ENCODE measurements at regions of chr1 and their contacts with region 1.

Region 1: DNA sequence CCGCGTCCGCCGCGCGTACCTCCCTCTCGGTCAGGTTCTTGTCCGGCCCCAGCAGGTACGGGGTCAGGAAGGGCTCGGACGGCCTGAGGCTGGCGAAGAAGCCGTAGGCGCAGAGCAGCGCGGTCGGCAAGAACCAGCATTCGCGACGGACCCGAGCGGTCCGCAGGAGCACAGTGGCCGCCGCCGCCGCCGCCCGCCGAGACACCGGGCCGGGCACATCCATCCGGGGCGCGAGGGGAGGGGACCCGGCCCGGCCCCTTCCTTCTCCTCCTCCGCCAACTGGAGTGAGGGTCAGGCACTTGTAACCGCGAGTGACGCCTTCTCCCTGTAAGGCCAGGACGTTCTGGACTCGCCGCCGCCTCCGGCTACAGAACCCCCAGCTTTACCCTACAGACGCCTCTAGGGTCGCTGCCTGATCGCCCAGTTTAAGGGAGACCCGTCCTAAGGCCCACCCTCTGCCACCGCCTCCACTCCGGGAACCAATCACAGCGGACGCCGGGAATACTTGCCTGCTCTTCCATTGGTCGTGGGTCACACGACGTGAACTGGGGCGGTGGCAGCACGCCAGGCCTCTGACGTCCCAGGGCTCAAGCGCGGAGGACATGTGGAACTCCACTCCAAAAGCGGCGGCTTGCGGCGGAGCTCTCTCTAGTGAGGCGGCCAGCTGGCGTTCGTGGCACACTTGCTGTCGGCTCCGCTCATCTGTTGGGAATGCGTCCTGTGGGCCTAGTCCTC is at the start of gene SLC19A2:
- DNase-seq: peak; percentile 98 to 100
- H3K4me3 ChIP-seq: peak within 1 kb of the TSS; percentile 80 to 98
- H3K27ac ChIP-seq: peak within 1 kb of the TSS; percentile 99 to 100
- H3K4me1 ChIP-seq: peaks cover 0 to 27% of the 10 kb centered on the region in 2 donors
- H3K27me3 ChIP-seq: no peaks in the 10 kb centered on the region
- CTCF ChIP-seq: peak in 2 of 3 experiments; percentile 32 to 39
- total RNA-seq, gene SLC19A2: 36.7 TPM

Region 2: DNA sequence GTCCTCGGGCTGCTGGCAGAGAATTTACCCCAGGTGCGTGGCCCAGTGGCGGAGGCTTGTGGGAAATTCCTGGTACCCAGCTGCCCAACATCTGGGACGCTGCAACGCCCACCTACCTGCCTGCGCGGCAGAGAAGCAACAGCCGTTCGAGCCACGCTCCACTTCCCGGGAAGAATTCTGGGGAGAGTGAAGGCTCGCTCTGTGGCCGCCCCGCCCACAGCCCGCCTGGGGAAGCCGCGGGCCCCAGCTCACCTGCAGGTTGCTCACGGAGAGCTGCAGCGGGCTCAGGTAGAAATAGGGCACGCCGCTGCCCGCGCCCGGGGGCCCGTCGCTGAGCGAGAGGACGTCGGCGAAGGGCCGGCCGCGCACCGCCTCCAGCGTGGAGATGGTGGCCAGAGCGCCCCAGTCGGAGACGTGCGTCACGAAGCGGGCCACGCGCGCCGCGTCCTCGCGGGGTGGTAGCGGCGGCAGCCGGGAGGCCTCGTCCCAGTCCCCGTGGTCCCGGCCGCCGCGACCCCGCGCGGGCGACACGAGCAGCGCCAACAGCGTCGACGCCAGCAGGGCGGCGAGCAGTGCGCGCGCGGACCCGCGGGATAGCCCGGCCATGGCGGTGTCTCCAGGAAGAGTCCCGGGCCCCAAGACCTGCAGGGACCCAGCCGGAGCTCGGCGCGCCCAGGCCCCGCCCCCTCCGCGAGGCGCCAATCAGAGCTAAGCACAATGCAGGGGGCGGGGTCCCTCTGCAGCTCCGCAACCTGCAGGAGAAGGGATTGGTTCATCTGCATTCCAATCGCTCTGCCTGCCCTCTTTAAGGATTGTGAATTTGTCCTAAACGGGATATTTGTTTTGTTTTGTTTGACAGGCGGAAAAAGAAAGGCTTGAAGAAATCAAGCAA is 1932.3 kb before region 1 on chr1 and contains the start of gene CREG1:
- intact Hi-C with region 1: loop called (anchors 10 kb)
- DNase-seq: peak; percentile 76 to 96
- H3K4me3 ChIP-seq: peak within 1 kb of the TSS; percentile 77 to 85
- H3K27ac ChIP-seq: peak within 1 kb of the TSS; percentile 74 to 80
- H3K4me1 ChIP-seq: peaks cover 0 to 7% of the 10 kb centered on the region in 2 donors
- H3K27me3 ChIP-seq: no peaks in the 10 kb centered on the region
- CTCF ChIP-seq: no peak
- total RNA-seq, gene CREG1: 170 TPM

Region 3: GRCh38 chr1:167936068-167936929 is 1549.4 kb before region 1 on chr1 and contains the start of gene DCAF6:
- intact Hi-C with region 1: loop called (anchors 10 kb)
- DNase-seq: peak; percentile 91 to 98
- H3K4me3 ChIP-seq: peak within 1 kb of the TSS; percentile 91
- H3K27ac ChIP-seq: peak within 1 kb of the TSS; percentile 96 to 98
- H3K4me1 ChIP-seq: peaks cover 0 to 14% of the 10 kb centered on the region in 2 donors
- H3K27me3 ChIP-seq: no peaks in the 10 kb centered on the region
- CTCF ChIP-seq: no peak
- total RNA-seq, gene DCAF6: 9.8 TPM

Region 4: GRCh38 chr1:168603501-168604110 is 882.1 kb before region 1 on chr1:
- intact Hi-C with region 1: loop called (anchors 10 kb)
- DNase-seq: peak in 1 of 2 donors; percentile 82
- H3K4me3 ChIP-seq: no peak overlapping the region
- H3K27ac ChIP-seq: no peak overlapping the region
- H3K4me1 ChIP-seq: peaks cover 1 to 10% of the 10 kb centered on the region in 2 donors
- H3K27me3 ChIP-seq: no peaks in the 10 kb centered on the region
- CTCF ChIP-seq: peak; percentile 76 to 86 (median 81)

Region 5: GRCh38 chr1:169367486-169368405 is 118.0 kb before region 1 on chr1 and contains the starts of genes BLZF1 and NME7:
- intact Hi-C with region 1: loop called (anchors 1 kb)
- DNase-seq: peak; percentile 95 to 98
- H3K4me3 ChIP-seq: peak within 1 kb of the TSS; percentile 84 to 90
- H3K27ac ChIP-seq: peak within 1 kb of the TSS; percentile 64 to 80
- H3K4me1 ChIP-seq: peaks cover 0 to 6% of the 10 kb centered on the region in 2 donors
- H3K27me3 ChIP-seq: no peaks in the 10 kb centered on the region
- CTCF ChIP-seq: no peak
- total RNA-seq, gene BLZF1: 8.5 TPM
- total RNA-seq, gene NME7: 4.9 TPM

Region 6: DNA sequence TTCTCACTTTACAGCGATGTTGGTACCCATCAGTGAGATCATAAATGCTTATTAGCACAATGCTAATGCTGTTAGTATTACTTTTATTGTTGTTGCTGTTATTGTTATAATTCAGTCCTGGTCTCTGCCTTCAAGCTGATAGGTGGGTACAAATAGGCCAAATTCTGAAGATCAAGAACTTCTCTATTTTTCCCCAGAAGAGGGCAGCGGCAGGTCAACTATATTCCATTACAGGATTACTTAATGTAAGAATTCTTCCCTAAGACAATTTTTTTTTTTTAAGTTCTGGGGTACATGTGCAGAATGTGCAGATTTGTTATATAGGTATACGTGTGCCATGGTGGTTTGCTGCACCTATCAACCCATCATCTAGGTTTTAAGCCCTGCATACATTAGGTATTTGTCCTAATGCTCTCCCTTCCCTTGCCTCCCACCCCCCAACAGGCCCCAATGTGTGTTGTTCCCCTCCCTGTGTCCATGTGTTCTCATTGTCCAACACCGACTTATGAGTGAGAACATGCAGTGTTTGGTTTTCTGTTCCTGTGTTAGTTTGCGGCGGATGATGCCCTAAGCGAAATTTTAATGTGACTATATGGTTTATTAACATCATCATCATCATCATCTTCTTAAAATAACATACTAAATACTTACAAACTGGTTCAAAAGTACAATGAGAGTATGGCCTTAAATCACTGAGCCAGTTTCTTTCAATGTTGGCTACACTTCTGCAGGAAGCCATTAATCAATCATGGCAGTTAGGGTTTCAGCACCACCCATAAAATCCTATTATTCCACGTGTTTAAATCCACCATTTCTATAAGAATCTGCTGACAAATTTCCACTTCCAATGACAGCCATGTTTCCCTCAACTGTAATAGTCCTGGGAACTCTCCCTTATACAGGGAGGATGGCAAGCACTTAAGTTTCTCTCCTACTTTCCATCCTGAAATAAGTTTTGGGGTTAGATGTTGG is 19.2 kb before region 1 on chr1:
- intact Hi-C with region 1: no loop called
- DNase-seq: no peak
- H3K4me3 ChIP-seq: no peak overlapping the region
- H3K27ac ChIP-seq: no peak overlapping the region
- H3K4me1 ChIP-seq: no peaks in the 10 kb centered on the region
- H3K27me3 ChIP-seq: no peaks in the 10 kb centered on the region
- CTCF ChIP-seq: peak; percentile 10 to 49 (median 29)

Region 7: DNA sequence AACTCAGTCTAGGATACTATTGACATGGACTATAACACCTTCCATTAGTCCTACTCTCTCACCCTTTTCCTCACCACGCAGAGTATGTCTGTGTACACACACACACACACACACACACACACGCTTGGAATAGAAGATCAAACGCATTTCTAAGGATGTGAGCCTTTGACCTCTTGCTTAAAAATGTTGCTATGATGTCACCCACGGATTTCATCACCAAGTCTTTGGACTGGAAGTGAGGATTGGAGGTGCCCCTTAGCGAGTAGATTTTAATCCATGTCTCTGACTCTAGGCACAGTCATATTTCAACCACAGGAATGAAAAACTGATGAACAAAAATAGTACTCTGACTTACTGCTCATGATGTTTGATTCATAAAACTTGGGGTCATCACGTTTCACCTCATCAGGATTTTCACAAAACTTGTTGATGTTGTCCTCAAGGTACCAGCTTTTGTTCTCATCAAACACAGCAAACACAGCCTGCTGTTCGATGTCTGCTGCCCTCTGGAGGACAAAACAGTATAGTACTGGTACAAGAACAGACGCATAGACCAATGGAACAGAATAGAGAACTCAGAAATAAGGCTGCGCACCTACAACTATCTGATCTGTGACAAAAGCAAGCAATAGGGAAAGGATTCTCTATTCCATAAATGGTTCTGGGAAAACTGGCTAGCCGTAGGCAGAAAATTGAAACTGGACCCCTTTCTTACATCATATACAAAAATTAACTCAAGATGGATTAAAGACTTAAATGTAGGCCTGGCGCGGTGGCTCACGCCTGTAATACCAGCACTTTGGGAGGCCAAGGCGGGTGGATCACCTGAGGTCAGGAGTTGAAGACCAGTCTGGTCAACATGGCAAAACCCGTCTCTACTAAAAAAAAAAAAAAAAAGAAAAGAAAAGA is 60.6 kb after region 1 on chr1:
- intact Hi-C with region 1: loop called (anchors 2 kb)
- DNase-seq: peak in 1 of 2 donors; percentile 74
- H3K4me3 ChIP-seq: no peak overlapping the region
- H3K27ac ChIP-seq: no peak overlapping the region
- H3K4me1 ChIP-seq: no peaks in the 10 kb centered on the region
- H3K27me3 ChIP-seq: no peaks in the 10 kb centered on the region
- CTCF ChIP-seq: peak; percentile 66 to 86 (median 67)